ENCODE measurements at regions of chr3 and their contacts with region 1.

Region 1: DNA sequence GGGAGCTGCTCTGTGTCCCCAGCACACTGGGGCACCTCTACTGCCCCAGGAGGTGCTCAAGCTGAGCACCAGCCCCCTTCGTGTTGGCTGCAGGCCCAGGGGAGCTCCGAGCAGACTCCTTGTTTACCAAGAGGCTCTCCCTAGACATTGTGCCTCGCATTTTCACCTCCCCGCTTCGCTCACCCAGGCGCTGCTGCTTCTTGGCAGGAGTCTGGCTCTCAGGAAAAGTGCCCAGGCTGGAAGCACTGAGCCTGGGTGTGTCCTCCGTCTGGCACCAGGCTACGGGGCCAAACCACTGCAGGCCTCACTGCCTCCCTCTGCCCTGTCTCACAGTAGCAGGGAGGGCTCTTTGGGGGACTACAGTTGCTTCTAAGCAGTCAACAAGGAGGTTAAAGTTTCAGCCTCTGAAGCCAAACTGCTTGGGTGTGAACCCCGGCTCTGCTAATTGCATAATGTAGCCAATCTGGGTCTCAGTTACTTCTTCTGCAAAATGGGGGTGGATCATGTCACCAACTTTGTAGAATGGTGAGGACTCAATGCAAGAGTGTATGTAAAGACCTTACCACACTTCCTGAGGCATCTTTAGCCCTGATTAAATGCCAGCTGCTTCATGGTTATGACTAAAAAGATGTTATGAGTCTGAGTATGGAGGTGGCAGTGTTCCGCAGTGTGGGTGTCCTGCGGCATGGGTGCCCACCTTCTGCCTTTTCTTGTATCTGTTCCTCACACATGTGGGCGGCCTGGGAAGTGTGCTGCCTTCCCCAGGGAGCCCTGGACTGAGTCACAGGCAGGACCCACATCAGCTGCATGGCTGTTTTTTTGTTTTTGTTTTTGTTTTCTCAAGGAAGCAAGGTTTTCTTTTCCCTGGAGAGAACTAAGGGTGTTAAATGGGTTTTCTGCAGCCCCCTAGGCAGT is 88.9 kb downstream of the CLSTN2 start:
- DNase-seq: peak; percentile 24 to 86 (median 74)
- H3K4me3 ChIP-seq: no peak overlapping the region
- H3K27ac ChIP-seq: peak overlapping the region in 44 of 59 donors; percentile 0 to 78 (median 51)
- H3K27me3 ChIP-seq: no peaks in the 10 kb centered on the region
- CTCF ChIP-seq: no peak

Region 2: GRCh38 chr3:140103166-140103565 is 79.3 kb after region 1 on chr3:
- intact Hi-C with region 1: loop called in 1 of 2 experiments (anchors 5 kb)
- DNase-seq: peak in 1 of 10 donors; percentile 37
- H3K4me3 ChIP-seq: no peak overlapping the region
- H3K27ac ChIP-seq: peak overlapping the region in 3 of 59 donors; percentile 4 to 12 (median 7)
- H3K27me3 ChIP-seq: no peaks in the 10 kb centered on the region
- CTCF ChIP-seq: no peak